MCF 10A (cell line): ENCODE measurements at regions of chr7 and their contacts with region 1.

Region 1: GRCh38 chr7:135745703-135746312 is 2.8 kb downstream of the FAM180A start:
- DNase-seq: peak; percentile 84
- H3K4me3 Mint-ChIP-seq: peak overlapping the region; percentile 3
- H3K27ac Mint-ChIP-seq: peak overlapping the region; percentile 86
- H3K4me1 Mint-ChIP-seq: peaks cover 30% of the 10 kb centered on the region
- H3K27me3 Mint-ChIP-seq: no peaks in the 10 kb centered on the region
- CTCF ChIP-seq: no peak

Region 2: DNA sequence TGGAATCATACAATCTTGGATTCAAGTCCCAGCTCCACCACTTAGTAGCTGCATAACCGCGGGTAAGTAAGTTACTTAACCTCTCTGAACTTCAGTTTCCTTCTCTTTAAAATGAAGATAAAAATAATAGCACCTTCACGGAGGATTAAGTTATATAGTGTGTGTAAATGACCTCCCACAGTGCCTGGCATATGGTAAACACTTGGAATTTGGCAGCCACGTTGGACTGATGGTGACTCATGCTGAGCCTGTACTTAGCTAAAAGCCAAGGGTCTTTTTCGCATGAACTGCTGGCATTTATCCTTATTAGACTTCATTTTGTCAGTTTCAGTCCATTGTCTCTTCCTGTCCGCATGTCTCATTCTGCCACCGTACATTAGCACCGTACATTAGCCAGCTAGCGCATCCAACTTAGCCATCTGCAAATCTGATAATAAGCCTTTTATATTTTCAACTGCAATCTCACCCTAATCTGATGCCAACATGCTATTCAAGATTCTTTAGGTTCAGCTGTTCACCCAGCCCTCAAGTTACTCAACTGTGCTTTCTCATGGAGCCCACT is 29.1 kb before region 1 on chr7:
- CTCF ChIA-PET with region 1: interaction called, 6 read pairs
- POLR2A ChIA-PET with region 1: interaction called, 12 read pairs
- intact Hi-C with region 1: loop called (anchors 5 kb)
- DNase-seq: peak; percentile 92
- H3K4me3 Mint-ChIP-seq: no peak overlapping the region
- H3K27ac Mint-ChIP-seq: no peak overlapping the region
- H3K4me1 Mint-ChIP-seq: no peaks in the 10 kb centered on the region
- H3K27me3 Mint-ChIP-seq: no peaks in the 10 kb centered on the region
- CTCF ChIP-seq: no peak

Region 3: DNA sequence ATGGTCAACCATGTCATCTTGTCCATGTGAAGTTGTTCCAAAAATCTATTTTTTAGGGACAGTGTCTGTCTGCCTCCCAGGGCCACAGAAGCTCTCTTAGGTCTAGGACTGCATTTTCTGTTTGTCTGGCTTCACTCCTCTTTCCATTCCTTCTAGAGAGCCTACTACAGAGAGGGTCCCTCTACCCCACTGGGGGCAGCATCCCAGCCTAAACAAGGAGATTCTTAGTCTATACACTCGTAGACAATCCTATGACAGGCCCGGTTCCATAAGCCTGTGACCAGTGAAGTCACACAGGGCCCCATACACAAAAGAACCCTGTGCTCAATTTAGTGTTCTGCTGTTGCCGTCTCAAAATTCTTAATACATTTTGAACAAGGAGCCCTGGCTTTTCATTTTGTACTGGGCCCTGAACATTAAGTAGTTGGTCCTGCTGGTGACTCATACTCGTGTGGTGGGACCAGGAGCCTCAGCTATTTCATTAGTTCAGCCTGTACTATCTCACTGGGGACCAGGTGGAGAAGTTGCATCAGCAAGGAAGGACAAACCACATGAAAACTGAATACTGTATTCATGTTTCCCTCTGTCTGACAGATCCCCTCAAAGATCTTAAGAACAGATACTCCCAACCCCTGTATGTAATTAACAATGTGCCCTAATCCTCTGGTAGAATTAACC is 26.3 kb after region 1 on chr7:
- CTCF ChIA-PET with region 1: no interaction called
- POLR2A ChIA-PET with region 1: no interaction called
- intact Hi-C with region 1: no loop called
- DNase-seq: peak; percentile 26
- H3K4me3 Mint-ChIP-seq: no peak overlapping the region
- H3K27ac Mint-ChIP-seq: no peak overlapping the region
- H3K4me1 Mint-ChIP-seq: peaks cover 7% of the 10 kb centered on the region
- H3K27me3 Mint-ChIP-seq: peaks cover 7% of the 10 kb centered on the region
- CTCF ChIP-seq: no peak